Upper lobe of right lung (tissue), 1 donor: ENCODE measurements at regions of chr3 and their contacts with region 1.

Region 1: DNA sequence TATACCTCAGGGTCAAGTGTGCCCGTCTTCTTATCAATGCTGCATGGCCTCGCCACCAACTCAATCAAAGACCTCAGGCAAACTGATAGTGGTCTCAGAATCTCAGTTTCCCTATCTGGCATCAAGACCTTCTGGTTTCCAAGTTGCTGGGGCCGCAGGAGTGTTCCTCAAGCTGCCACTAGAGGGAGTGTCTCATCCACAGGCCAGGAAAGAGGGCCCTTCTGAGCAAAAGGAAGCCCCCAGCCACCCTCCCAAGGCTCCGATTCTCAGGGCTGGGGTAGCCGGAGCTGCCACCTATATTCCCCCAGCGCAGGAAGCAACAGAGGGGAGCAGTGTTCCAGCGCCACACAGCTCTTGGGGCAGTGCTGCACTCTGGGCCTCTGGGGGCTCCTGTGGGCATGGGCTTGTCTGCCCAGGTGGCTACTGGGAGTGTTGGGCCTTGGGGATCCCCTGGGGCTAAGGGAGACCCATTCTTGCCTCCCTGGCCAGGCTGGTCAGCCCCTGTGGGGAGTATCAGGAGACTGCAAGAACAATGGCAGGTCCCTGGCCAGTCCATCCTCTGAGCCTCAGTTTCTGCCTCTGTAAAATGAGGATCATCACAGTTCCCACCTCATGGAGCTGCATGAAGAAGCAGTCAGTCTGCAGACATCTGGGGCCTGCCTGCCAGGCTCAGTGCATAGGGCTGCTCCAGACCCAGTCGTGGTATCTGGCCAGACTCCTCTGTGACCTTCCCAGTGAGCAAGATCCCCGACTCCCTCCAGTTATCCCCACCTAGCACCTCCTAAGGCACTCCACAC is 23.4 kb upstream of the SEC13 start:
- DNase-seq: no peak
- ATAC-seq: peak; percentile 26
- H3K4me3 ChIP-seq: no peak overlapping the region
- H3K27ac ChIP-seq: no peak overlapping the region
- H3K4me1 ChIP-seq: no peaks in the 10 kb centered on the region
- H3K27me3 ChIP-seq: no peaks in the 10 kb centered on the region
- CTCF ChIP-seq: peak; percentile 87

Region 2: GRCh38 chr3:10198761-10199649 is 145.3 kb before region 1 on chr3:
- intact Hi-C with region 1: no loop called
- DNase-seq: no peak
- ATAC-seq: peak; percentile 83
- H3K4me3 ChIP-seq: no peak overlapping the region
- H3K27ac ChIP-seq: peak overlapping the region; percentile 55
- H3K4me1 ChIP-seq: peaks cover 38% of the 10 kb centered on the region
- H3K27me3 ChIP-seq: no peaks in the 10 kb centered on the region
- CTCF ChIP-seq: no peak

Region 3: GRCh38 chr3:10738688-10739372 is 394.5 kb after region 1 on chr3:
- intact Hi-C with region 1: loop called (anchors 5 kb)
- DNase-seq: peak; percentile 80
- ATAC-seq: peak; percentile 87
- H3K4me3 ChIP-seq: no peak overlapping the region
- H3K27ac ChIP-seq: no peak overlapping the region
- H3K4me1 ChIP-seq: peaks cover 7% of the 10 kb centered on the region
- H3K27me3 ChIP-seq: peaks cover 36% of the 10 kb centered on the region
- CTCF ChIP-seq: peak; percentile 86